ENCODE measurements at regions of chr7 and their contacts with region 1.

Region 1: DNA sequence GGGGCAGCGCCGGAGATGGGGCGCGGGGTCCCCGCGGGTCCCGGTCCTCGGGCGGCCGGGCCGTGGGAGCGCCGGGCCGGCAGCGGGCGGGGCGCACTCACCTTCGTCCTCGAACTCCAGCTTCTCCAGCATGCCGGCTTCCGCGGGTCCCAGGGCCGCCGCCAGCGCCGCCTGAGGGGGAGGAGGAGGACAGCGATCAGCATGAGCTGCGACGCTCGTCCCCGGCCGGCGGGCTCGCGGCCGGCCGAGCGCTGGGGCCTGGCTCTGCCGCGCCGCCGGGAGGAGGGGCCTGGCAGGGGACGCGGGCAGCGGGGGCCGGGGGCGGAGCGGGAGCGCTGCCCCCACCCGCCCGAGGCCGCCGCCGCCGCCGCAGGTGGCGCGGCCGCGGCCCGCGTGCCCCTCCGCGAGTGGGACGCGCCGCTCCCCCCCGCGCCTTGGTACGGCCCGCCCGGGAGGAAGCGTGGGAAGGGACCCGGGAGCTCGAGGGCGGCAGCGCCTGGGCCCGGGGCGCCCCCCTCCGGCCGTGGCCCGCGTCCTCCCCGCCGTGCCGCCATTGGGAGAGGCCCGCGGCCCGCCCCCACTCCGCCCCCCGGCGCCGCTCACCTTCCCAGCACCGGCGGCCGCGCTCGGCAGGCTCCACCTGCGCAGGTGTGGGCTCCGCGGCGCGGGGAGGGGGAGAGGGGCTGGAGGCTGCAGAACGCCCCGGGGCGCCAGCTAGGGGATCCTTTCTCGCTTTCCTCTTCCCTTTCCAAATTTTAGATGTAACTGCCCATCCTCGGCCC is 112.5 kb upstream of the RHEB start:
- DNase-seq: peak; percentile 87
- H3K4me3 ChIP-seq: peak overlapping the region; percentile 52 to 86 (median 74)
- H3K27ac ChIP-seq: peak overlapping the region; percentile 94 to 97 (median 95)
- H3K4me1 ChIP-seq: peaks cover 0 to 48% (median 41%) of the 10 kb centered on the region in 4 donors
- H3K27me3 ChIP-seq: no peaks in the 10 kb centered on the region
- CTCF ChIP-seq: peak in 1 of 4 experiments; percentile 15
- EP300 ChIP-seq: no peak
- POLR2A ChIP-seq: no peak

Region 2: DNA sequence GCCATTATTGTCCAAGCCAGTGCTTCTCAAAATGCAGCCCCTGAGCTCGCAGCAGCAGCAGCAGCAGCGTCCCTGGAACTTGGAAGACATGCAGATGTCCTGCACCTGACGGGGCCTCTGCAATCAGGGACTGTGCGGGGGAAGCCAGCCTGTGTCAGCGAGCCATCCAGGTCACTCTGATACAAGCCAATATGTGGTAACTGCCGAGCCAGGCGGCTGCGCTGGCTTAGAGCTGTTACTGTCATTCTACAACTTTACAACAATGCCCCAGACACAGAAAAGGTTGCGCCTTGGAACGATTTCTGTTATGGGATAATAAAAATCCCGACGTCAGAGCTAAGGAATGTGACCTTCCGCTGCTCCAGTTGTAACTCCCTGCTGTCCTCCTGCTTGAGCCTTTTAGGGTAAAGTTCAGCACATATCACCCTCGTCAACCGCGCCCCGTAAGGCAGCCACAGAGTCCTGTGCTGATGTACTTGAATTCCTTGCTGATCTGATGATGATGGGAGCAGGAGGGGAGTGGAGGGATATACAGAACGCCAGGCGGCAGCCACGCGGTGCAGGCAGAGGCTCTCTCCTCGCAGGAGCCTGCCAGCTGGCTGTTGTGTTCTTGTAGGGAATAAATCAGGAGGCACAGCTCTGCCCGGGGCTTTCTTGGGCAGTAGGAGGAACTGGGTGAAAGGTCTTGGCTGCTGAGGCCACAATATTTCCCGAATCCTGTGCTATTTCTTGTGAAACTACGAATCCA is 172.3 kb before region 1 on chr7:
- intact Hi-C with region 1: loop called (anchors 1 kb)
- DNase-seq: peak; percentile 98
- H3K4me3 ChIP-seq: peak overlapping the region in 3 of 4 donors; percentile 13 to 29 (median 27)
- H3K27ac ChIP-seq: peak overlapping the region; percentile 85 to 98 (median 96)
- H3K4me1 ChIP-seq: peaks cover 0 to 34% (median 32%) of the 10 kb centered on the region in 4 donors
- H3K27me3 ChIP-seq: no peaks in the 10 kb centered on the region
- CTCF ChIP-seq: peak in 2 of 4 experiments; percentile 13 to 23
- EP300 ChIP-seq: peak; percentile 70 to 99 (median 92)
- POLR2A ChIP-seq: peak in 1 of 2 donors; percentile 12

Region 3: GRCh38 chr7:151519765-151520418 is 112.3 kb before region 1 on chr7 and contains the start of gene RHEB:
- intact Hi-C with region 1: loop called (anchors 2 kb)
- DNase-seq: peak; percentile 100
- H3K4me3 ChIP-seq: peak within 1 kb of the TSS; percentile 72 to 93 (median 80)
- H3K27ac ChIP-seq: peak within 1 kb of the TSS; percentile 94 to 99 (median 96)
- H3K4me1 ChIP-seq: peaks cover 0 to 40% (median 36%) of the 10 kb centered on the region in 4 donors
- H3K27me3 ChIP-seq: no peaks in the 10 kb centered on the region
- CTCF ChIP-seq: no peak
- EP300 ChIP-seq: peak in 2 of 4 donors; percentile 60 to 76
- POLR2A ChIP-seq: peak; percentile 25 to 47
- total RNA-seq, gene RHEB: 121 to 162 (median 136) TPM

Region 4: GRCh38 chr7:151736403-151736909 is 104.3 kb after region 1 on chr7:
- intact Hi-C with region 1: loop called (anchors 5 kb)
- DNase-seq: peak; percentile 90
- H3K4me3 ChIP-seq: peak overlapping the region; percentile 16 to 51 (median 45)
- H3K27ac ChIP-seq: peak overlapping the region; percentile 74 to 83 (median 78)
- H3K4me1 ChIP-seq: peaks cover 0 to 22% (median 17%) of the 10 kb centered on the region in 4 donors
- H3K27me3 ChIP-seq: no peaks in the 10 kb centered on the region
- CTCF ChIP-seq: no peak
- EP300 ChIP-seq: peak in 1 of 4 donors; percentile 74
- POLR2A ChIP-seq: no peak